ENCODE measurements at regions of chr3 and their contacts with region 1.

Region 1: DNA sequence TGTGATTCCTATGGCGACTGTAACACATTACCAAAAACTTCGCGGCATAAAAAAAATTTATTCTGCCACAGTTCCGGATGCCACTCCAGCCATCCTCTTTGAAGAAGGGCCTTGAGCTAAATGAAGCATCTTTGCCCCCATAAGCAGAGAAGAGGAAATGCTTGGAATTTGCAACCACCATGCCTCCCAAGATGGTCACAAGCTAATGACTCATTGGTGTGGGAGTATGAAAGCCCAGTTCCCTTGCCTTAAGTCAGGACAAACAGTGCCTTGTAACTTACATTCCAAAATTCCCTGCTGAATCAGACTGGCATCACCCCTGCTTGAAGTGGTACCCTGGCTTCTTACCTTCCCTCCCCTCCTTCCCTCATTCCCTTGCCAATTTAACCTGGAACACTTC is 1077.4 kb downstream of the EPHA3 start:
- DNase-seq: no peak
- ATAC-seq: no peak
- H3K4me3 ChIP-seq: no peak overlapping the region
- H3K4me3 Mint-ChIP-seq: no peak overlapping the region
- H3K27ac ChIP-seq: no peak overlapping the region
- H3K27ac Mint-ChIP-seq: no peak overlapping the region
- H3K4me1 ChIP-seq: no peaks in the 10 kb centered on the region
- H3K4me1 Mint-ChIP-seq: no peaks in the 10 kb centered on the region
- H3K27me3 ChIP-seq: no peaks in the 10 kb centered on the region
- H3K27me3 Mint-ChIP-seq: no peaks in the 10 kb centered on the region
- CTCF ChIP-seq: no peak

Region 2: DNA sequence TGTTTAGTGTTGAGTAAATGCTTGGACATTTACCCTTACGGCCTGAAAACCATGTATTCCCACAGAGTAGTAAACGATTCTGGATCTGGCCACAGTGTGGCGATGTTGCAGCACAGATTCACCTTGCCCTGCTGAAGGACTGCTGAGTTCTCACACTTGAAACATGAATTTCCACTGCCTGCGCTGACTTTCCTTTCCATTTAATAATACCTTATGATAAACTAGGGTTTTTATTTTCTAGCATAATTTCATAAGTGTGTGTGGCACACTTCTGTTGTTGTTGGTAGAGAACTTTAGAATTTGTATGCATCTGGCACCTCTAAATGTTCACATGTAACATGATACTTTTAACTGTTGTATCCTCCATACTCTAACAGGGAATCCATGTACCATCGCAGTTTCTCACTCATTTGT is 1981.2 kb before region 1 on chr3:
- CTCF ChIA-PET with region 1: no interaction called
- POLR2A ChIA-PET with region 1: no interaction called
- intact Hi-C with region 1: loop called in 1 of 2 experiments (anchors 10 kb)
- DNase-seq: peak; percentile 8 to 53 (median 34)
- ATAC-seq: peak; percentile 65
- H3K4me3 ChIP-seq: no peak overlapping the region
- H3K4me3 Mint-ChIP-seq: no peak overlapping the region
- H3K27ac ChIP-seq: no peak overlapping the region
- H3K27ac Mint-ChIP-seq: no peak overlapping the region
- H3K4me1 ChIP-seq: no peaks in the 10 kb centered on the region
- H3K4me1 Mint-ChIP-seq: no peaks in the 10 kb centered on the region
- H3K27me3 ChIP-seq: no peaks in the 10 kb centered on the region
- H3K27me3 Mint-ChIP-seq: no peaks in the 10 kb centered on the region
- CTCF ChIP-seq: peak; percentile 75